CD8-positive, alpha-beta T cell (primary cell): ENCODE measurements at regions of chr13 and their contacts with region 1.

Region 1: GRCh38 chr13:44050450-44051063 is 170.9 kb downstream of the LACC1 start:
- DNase-seq: peak in 2 of 9 experiments; percentile 55 to 64
- ATAC-seq: peak; percentile 49
- H3K4me3 ChIP-seq: no peak overlapping the region
- H3K4me3 Mint-ChIP-seq: no peak overlapping the region
- H3K27ac ChIP-seq: no peak overlapping the region
- H3K27ac Mint-ChIP-seq: no peak overlapping the region
- H3K4me1 ChIP-seq: no peaks in the 10 kb centered on the region
- H3K4me1 Mint-ChIP-seq: no peaks in the 10 kb centered on the region
- H3K27me3 ChIP-seq: peaks cover 0 to 5% of the 10 kb centered on the region in 2 experiments
- H3K27me3 Mint-ChIP-seq: peaks cover 25% of the 10 kb centered on the region
- CTCF ChIP-seq: peak; percentile 77

Region 2: GRCh38 chr13:44191504-44192171 is 141.1 kb after region 1 on chr13:
- CTCF ChIA-PET with region 1: no interaction called
- POLR2A ChIA-PET with region 1: no interaction called
- intact Hi-C with region 1: loop called (anchors 5 to 10 kb)
- DNase-seq: peak in 8 of 9 experiments; percentile 7 to 76 (median 38)
- ATAC-seq: peak; percentile 80
- H3K4me3 ChIP-seq: no peak overlapping the region
- H3K4me3 Mint-ChIP-seq: peak overlapping the region; percentile 40
- H3K27ac ChIP-seq: peak overlapping the region; percentile 5 to 9
- H3K27ac Mint-ChIP-seq: peak overlapping the region; percentile 87
- H3K4me1 ChIP-seq: peaks cover 9% of the 10 kb centered on the region
- H3K4me1 Mint-ChIP-seq: peaks cover 31% of the 10 kb centered on the region
- H3K27me3 ChIP-seq: no peaks in the 10 kb centered on the region
- H3K27me3 Mint-ChIP-seq: no peaks in the 10 kb centered on the region
- CTCF ChIP-seq: peak; percentile 26